ENCODE measurements at regions of chr17 and their contacts with region 1.

Region 1: GRCh38 chr17:50345432-50346312 is at the start of gene XYLT2:
- DNase-seq: peak; percentile 94 to 99
- H3K4me3 ChIP-seq: peak within 1 kb of the TSS; percentile 85
- H3K4me3 Mint-ChIP-seq: peak within 1 kb of the TSS; percentile 96
- H3K27ac Mint-ChIP-seq: peak within 1 kb of the TSS; percentile 81
- H3K4me1 ChIP-seq: peaks cover 13% of the 10 kb centered on the region
- H3K4me1 Mint-ChIP-seq: peaks cover 22% of the 10 kb centered on the region
- H3K27me3 ChIP-seq: no peaks in the 10 kb centered on the region
- H3K27me3 Mint-ChIP-seq: no peaks in the 10 kb centered on the region
- CTCF ChIP-seq: no peak
- total RNA-seq, gene XYLT2: 72.9 and 75.8 TPM in 2 replicates

Region 2: GRCh38 chr17:50372758-50373556 is 27.3 kb after region 1 on chr17 and contains the starts of genes EME1 and MRPL27:
- CTCF ChIA-PET with region 1: interaction called, 3 read pairs
- POLR2A ChIA-PET with region 1: no interaction called
- intact Hi-C with region 1: loop called (anchors 2 kb)
- DNase-seq: peak; percentile 96
- H3K4me3 ChIP-seq: peak within 1 kb of the TSS; percentile 52
- H3K4me3 Mint-ChIP-seq: peak within 1 kb of the TSS; percentile 89
- H3K27ac Mint-ChIP-seq: peak within 1 kb of the TSS; percentile 98
- H3K4me1 ChIP-seq: peaks cover 7% of the 10 kb centered on the region; the same call in 1 of the 2 replicates
- H3K4me1 Mint-ChIP-seq: peaks cover 17% of the 10 kb centered on the region
- H3K27me3 ChIP-seq: no peaks in the 10 kb centered on the region
- H3K27me3 Mint-ChIP-seq: no peaks in the 10 kb centered on the region
- CTCF ChIP-seq: no peak
- total RNA-seq, gene EME1: 43.5 and 48.5 TPM in 2 replicates
- total RNA-seq, gene MRPL27: 196 and 203 TPM in 2 replicates

Region 3: GRCh38 chr17:50589095-50589705 is 243.5 kb after region 1 on chr17:
- CTCF ChIA-PET with region 1: no interaction called
- POLR2A ChIA-PET with region 1: no interaction called
- intact Hi-C with region 1: no loop called
- DNase-seq: no peak
- H3K4me3 ChIP-seq: no peak overlapping the region
- H3K4me3 Mint-ChIP-seq: no peak overlapping the region
- H3K27ac Mint-ChIP-seq: no peak overlapping the region
- H3K4me1 ChIP-seq: peaks cover 9% of the 10 kb centered on the region
- H3K4me1 Mint-ChIP-seq: peaks cover 2% of the 10 kb centered on the region
- H3K27me3 ChIP-seq: no peaks in the 10 kb centered on the region
- H3K27me3 Mint-ChIP-seq: no peaks in the 10 kb centered on the region
- CTCF ChIP-seq: no peak